ENCODE measurements at regions of chr10 and their contacts with region 1.

Region 1: GRCh38 chr10:43204943-43205671 is 61.8 kb downstream of the RASGEF1A start:
- DNase-seq: peak; percentile 52
- H3K4me3 ChIP-seq: no peak overlapping the region
- H3K27ac ChIP-seq: no peak overlapping the region
- H3K4me1 ChIP-seq: peaks cover 5% of the 10 kb centered on the region
- H3K27me3 ChIP-seq: no peaks in the 10 kb centered on the region
- CTCF ChIP-seq: peak; percentile 69

Region 2: DNA sequence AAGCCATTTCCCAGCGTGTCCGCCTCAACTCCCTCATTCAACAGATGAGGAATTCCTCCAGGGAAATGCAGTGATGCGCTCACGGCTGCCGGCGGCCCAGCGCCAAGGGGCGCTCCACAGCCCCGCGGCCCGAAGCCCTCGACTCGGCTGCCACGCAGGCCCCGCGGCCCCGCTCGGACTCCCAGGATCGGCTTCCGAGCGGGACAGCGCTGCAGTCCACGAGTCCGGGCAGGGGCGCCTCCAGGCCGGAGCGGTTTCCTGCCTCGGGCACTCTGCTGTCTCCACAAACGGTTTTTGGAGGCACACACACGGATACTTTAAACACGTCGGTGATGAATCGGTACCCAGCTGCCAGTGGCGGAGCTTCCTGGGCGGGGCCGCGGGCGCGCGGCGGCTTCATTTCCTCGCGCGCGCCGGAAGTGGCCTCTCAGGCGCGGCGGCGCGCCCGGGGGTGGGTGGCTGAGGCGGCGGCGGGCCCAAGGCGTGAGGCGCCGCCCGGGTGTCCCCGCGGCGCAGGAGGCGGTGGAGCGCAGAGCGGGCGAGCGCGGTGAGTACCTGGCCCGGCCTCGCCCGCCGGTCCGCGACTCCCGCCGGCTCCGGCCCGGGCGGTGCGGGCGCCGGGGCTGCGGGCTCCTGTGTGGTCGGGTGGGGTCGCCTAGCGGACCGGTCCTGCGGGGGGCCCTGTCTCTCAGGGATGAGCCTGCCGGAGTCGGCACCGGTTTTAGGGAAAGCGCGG is 66.9 kb before region 1 on chr10 and contains the start of gene CSGALNACT2:
- CTCF ChIA-PET with region 1: no interaction called
- dilution Hi-C with region 1: no loop called
- in situ Hi-C with region 1: no loop called
- intact Hi-C with region 1: loop called (anchors 10 kb)
- DNase-seq: peak; percentile 85
- H3K4me3 ChIP-seq: peak within 1 kb of the TSS; percentile 70 to 86 (median 86)
- H3K27ac ChIP-seq: peak within 1 kb of the TSS; percentile 58
- H3K4me1 ChIP-seq: peaks cover 14% of the 10 kb centered on the region
- H3K27me3 ChIP-seq: no peaks in the 10 kb centered on the region
- CTCF ChIP-seq: no peak
- total RNA-seq, gene CSGALNACT2: 13.8 to 24.5 TPM

Region 3: DNA sequence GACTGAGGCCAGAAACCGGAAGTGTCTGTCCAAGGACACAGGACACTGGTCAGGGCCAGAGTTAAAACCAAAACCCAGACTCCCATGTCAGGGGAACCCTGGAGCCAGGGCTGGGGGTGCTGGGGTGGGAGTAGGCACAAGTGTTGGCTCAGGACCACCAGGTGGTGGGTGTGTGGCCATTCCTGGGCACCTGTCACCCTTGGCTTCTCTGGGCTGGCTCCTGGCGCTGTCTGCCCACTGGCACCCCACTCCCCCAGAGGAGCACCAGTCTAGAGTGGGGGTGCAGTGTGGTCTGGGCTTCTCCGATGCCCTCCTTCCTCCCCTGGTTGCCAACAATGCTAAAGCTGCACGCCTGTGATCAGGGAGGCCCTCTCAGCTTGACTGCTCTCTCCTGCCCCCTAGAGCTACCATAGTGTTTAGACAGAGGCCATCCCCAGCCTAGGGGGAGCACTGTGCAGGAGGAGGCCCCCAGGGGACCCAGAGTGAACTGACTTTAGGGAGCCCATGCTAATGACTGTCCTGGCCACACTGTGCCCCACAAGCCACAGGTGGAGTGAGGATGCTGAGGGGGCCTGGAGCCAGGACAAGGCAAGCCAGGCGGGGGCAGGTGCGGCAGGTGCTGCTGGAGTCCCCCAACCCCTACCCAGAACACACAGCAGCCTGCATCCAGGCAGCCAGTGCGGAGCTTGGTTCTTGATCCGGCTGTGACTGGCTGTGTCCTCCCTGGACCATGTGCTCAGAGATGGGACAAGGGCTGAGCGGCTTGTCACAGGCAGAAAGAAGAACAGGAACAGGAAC is 50.7 kb after region 1 on chr10:
- CTCF ChIA-PET with region 1: no interaction called
- dilution Hi-C with region 1: no loop called
- in situ Hi-C with region 1: no loop called
- intact Hi-C with region 1: loop called (anchors 2 kb)
- DNase-seq: no peak
- H3K4me3 ChIP-seq: no peak overlapping the region
- H3K27ac ChIP-seq: no peak overlapping the region
- H3K4me1 ChIP-seq: peaks cover 5% of the 10 kb centered on the region
- H3K27me3 ChIP-seq: peaks cover 3% of the 10 kb centered on the region
- CTCF ChIP-seq: peak; percentile 53 to 64

Region 4: DNA sequence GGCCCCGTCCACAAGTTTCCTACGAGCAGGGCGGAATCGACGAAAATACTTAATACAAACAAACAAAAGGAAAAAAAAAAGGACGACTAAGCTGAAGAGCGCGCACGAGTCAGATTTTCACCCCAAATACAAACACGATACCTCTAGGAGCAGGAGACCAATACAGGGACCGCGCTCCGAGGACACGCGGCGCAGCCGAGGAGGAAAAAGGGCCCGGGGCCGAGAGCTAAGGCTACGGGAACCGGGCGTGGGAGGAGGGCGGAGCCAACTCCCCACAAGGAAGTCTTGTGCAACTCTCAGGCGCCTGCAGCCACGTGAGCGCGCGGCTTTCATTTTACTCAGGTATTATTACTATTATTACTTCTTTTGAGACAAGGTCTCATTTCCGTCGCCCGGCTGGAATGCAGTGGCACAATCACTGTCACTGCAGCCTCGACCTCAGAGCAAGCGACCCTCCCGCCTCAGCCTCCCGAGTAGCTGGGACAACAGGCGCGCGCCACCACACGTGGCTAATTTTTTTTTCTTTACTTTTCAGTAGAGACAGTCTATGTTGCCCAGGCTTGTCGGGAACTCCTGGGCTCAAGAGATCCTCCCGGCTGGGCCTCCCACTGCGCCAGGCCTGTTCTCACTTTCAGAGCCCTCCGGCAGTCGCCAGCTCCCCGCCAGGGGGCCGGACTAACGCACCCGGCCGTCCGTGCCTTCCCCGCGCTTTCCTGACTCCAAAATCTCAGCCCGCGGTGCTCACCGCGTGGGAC is 202.6 kb after region 1 on chr10:
- CTCF ChIA-PET with region 1: no interaction called
- dilution Hi-C with region 1: no loop called
- in situ Hi-C with region 1: no loop called
- intact Hi-C with region 1: no loop called
- DNase-seq: peak; percentile 86
- H3K4me3 ChIP-seq: peak overlapping the region; percentile 72 to 93 (median 89)
- H3K27ac ChIP-seq: peak overlapping the region; percentile 97
- H3K4me1 ChIP-seq: peaks cover 28% of the 10 kb centered on the region
- H3K27me3 ChIP-seq: no peaks in the 10 kb centered on the region
- CTCF ChIP-seq: peak; percentile 9 to 53

Region 5: DNA sequence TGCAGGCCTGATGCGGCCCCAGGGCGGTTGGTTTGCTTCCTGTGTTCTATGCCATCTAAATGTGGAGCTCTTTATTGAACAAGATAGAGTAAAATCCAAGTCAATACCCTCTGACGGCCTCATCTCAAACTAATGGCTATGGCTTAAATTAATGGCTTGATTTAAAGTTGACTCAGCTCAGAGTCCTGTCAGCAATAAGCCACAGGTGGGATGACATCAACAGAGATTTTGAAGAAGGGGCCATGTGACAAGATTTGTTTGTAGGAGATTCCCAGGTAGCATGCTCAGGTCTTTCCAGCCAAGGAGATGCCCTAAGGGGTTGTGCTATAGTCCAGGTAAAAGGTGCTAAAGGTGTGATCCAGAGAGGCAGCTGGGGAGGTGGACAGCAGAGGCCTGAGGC is 510.3 kb after region 1 on chr10:
- CTCF ChIA-PET with region 1: no interaction called
- dilution Hi-C with region 1: no loop called
- in situ Hi-C with region 1: no loop called
- intact Hi-C with region 1: no loop called
- DNase-seq: no peak
- H3K4me3 ChIP-seq: no peak overlapping the region
- H3K27ac ChIP-seq: no peak overlapping the region
- H3K4me1 ChIP-seq: no peaks in the 10 kb centered on the region
- H3K27me3 ChIP-seq: no peaks in the 10 kb centered on the region
- CTCF ChIP-seq: no peak

Measured in mammary epithelial cell (primary cell).